AG04449 (cell line): ENCODE measurements at regions of chr3 and their contacts with region 1.

Region 1: DNA sequence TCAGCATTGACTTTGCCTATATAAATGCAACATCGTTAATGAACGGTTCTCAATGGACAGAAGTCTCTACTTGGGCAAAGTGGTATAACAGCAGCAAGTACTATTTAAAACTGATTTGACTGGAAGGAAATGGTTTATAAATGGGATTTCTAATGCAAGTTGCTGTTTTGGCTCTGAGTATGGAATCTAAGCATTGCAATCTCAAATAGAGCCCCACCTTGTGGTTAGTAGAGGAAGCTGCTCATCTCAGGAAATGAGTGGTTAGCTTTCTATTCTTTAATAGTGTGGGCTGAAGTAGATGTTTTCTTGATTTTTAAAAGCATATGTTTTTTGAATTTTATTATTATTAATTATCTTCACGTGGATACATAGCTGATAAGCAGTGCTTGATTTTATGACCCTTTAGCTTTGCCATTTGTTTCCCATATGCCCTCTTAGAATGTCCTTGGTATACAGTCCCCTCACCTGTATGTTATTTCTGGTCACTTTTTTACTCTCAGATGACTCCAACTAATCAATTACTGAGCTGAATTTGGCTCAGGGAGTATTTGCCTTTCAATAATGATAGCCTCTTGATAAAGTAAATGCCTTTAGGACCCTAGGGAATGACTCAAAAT is 67.1 kb downstream of the OXSM start:
- DNase-seq: peak; percentile 19
- H3K4me3 ChIP-seq: no peak overlapping the region
- CTCF ChIP-seq: peak; percentile 67

Region 2: GRCh38 chr3:25843332-25843731 is 13.7 kb before region 1 on chr3:
- CTCF ChIA-PET with region 1: interaction called, 49 read pairs
- POLR2A ChIA-PET with region 1: no interaction called
- DNase-seq: no peak
- H3K4me3 ChIP-seq: no peak overlapping the region
- CTCF ChIP-seq: no peak